Adrenal gland (tissue), 19 donors: ENCODE measurements at regions of chr7 and their contacts with region 1.

Region 1: GRCh38 chr7:111763221-111763801 is 201.0 kb upstream of the IMMP2L start:
- DNase-seq: no peak
- H3K4me3 ChIP-seq: no peak overlapping the region
- H3K27ac ChIP-seq: no peak overlapping the region
- H3K4me1 ChIP-seq: no peaks in the 10 kb centered on the region
- H3K27me3 ChIP-seq: no peaks in the 10 kb centered on the region
- CTCF ChIP-seq: peak; percentile 42 to 67 (median 54)
- POLR2A ChIP-seq: no peak

Region 2: DNA sequence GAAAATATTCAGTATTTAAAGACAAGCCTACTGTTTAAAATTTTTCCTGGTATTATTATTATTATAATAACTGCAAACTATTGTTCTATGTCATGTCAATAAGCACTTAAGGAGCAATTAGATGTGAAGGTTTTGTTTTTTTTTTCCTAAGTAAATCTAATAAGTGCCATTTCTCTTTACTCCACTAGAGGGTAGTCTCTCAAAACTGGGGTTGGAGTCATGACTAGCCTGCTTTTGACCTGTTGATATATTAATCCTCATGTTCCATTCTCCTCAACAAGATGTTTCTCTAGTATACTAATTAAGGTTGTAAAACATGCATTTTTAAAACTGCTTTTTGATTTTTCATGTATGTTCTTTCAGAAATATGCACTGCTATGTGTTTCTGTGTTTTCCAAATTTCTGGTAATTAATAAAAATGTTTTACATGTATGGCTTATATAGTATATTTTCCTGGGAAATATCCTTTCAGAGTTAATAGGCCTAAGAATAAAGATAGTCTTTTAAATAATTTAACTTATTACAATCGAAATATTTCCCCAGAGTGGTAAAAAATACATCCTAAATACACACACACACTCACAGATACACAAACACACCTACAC is 673.4 kb before region 1 on chr7:
- intact Hi-C with region 1: no loop called
- DNase-seq: no peak
- H3K4me3 ChIP-seq: no peak overlapping the region
- H3K27ac ChIP-seq: no peak overlapping the region
- H3K4me1 ChIP-seq: peaks cover 5 to 17% of the 10 kb centered on the region in 2 donors
- H3K27me3 ChIP-seq: no peaks in the 10 kb centered on the region
- CTCF ChIP-seq: peak; percentile 47 to 85 (median 74)
- POLR2A ChIP-seq: no peak

Region 3: DNA sequence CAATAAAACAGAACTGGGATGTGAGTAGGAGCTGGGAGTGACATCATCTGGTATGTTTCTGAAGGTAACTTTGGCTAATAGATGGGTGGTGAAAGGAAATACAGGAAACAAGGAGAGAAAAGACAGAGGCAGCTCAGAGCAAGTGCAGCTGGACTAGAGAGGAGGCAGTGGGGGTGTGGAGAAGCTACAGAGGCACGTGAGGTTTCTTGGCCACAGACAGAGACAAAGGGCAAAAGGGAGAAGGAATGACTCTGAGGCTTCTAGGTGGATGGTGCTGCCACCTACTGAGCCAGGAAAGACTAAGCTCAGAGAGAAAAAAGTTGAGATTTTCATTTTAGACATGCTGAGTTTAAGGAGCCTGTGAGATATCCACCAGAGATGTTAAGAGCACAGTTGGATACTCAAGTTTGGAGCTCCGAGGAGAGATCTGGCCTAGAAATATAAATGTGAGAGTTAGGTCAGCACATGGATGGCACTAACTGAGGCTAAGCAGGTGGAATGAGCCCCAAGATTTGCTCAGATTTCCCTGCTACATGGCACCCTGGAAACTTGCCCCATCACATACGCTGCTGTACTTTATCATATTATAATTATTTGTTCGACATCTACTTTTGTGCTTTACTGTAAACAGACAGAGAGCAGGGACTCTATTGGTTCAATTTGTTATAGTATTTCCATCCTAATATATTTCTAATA is 92.0 kb after region 1 on chr7:
- intact Hi-C with region 1: loop called in 1 of 2 experiments (anchors 10 kb)
- DNase-seq: peak in 5 of 7 donors; percentile 16 to 58 (median 29)
- H3K4me3 ChIP-seq: no peak overlapping the region
- H3K27ac ChIP-seq: no peak overlapping the region
- H3K4me1 ChIP-seq: no peaks in the 10 kb centered on the region
- H3K27me3 ChIP-seq: no peaks in the 10 kb centered on the region
- CTCF ChIP-seq: peak; percentile 13 to 45 (median 24)
- POLR2A ChIP-seq: no peak

Region 4: GRCh38 chr7:112414855-112415490 is 651.7 kb after region 1 on chr7:
- intact Hi-C with region 1: loop called (anchors 10 kb)
- DNase-seq: peak in 1 of 7 donors; percentile 12
- H3K4me3 ChIP-seq: no peak overlapping the region
- H3K27ac ChIP-seq: no peak overlapping the region
- H3K4me1 ChIP-seq: peaks cover 0 to 9% of the 10 kb centered on the region in 2 donors
- H3K27me3 ChIP-seq: no peaks in the 10 kb centered on the region
- CTCF ChIP-seq: peak; percentile 34 to 67 (median 58)
- POLR2A ChIP-seq: no peak

Region 5: GRCh38 chr7:113044394-113044793 is 1281.1 kb after region 1 on chr7:
- intact Hi-C with region 1: no loop called
- DNase-seq: no peak
- H3K4me3 ChIP-seq: no peak overlapping the region
- H3K27ac ChIP-seq: no peak overlapping the region
- H3K4me1 ChIP-seq: no peaks in the 10 kb centered on the region
- H3K27me3 ChIP-seq: no peaks in the 10 kb centered on the region
- CTCF ChIP-seq: no peak
- POLR2A ChIP-seq: no peak